Heart right ventricle (tissue), 16 donors: ENCODE measurements at regions of chr6 and their contacts with region 1.

Region 1: DNA sequence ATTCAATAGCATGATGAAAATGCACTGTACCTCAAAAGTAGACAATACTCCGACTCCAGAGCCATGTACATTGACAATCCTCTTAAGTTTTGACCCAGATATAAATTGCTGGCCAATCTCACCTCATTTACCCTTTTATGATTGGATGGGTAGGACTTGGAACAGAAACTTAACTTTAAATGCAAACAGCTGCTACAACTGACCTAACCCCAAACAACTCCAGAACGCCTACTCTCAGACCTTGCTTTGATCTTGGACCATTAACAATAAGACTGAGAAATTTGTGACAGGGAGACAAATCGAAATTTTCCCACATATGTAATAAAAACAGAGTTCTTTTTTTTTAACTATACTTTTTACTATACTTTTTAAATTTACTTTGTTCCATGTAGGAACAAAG is 200.5 kb upstream of the MCHR2 start:
- DNase-seq: no peak
- ATAC-seq: no peak
- H3K4me3 ChIP-seq: no peak overlapping the region
- H3K27ac ChIP-seq: no peak overlapping the region
- H3K4me1 ChIP-seq: no peaks in the 10 kb centered on the region
- H3K27me3 ChIP-seq: no peaks in the 10 kb centered on the region
- CTCF ChIP-seq: no peak

Region 2: DNA sequence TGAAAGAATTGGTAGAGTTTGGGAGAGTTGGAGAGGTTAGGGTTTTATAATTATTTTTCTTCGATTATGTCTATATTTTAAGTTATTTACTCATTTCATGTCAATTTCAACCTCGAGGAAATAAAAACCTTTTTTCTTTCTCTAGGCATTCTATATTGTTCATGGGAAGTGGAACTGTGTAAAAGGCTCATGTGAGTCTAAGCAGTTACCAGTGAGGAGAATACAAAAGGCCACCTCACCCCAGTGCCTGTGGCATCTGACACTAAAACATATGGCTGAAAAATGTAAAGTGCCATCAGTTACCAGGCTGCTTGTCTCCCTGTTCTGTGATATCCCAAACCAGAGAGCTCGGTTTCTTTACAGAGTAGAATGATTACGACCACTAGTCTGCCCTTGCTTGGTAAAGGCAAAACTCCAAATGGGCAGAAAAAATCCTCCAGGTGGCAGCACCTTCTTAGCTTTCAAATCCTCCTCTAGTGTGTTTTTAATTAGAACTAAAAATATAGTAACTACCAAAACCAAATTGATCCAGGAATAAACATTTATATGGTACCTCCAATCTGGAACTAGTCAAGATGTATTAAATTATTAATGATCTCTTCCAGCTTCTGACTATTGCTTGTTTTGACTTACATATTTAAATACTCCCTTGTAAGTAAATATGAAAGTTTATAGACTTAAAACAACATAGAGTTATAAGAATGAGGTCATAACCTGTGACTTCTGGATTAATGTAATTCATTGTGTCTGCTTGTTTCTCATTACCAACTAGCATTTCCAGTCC is 77.9 kb before region 1 on chr6:
- intact Hi-C with region 1: no loop called
- DNase-seq: peak in 1 of 2 donors; percentile 29
- ATAC-seq: no peak
- H3K4me3 ChIP-seq: no peak overlapping the region
- H3K27ac ChIP-seq: no peak overlapping the region
- H3K4me1 ChIP-seq: no peaks in the 10 kb centered on the region
- H3K27me3 ChIP-seq: peaks cover 0 to 10% (median 0%) of the 10 kb centered on the region in 7 donors
- CTCF ChIP-seq: peak; percentile 34 to 72 (median 64)

Region 3: DNA sequence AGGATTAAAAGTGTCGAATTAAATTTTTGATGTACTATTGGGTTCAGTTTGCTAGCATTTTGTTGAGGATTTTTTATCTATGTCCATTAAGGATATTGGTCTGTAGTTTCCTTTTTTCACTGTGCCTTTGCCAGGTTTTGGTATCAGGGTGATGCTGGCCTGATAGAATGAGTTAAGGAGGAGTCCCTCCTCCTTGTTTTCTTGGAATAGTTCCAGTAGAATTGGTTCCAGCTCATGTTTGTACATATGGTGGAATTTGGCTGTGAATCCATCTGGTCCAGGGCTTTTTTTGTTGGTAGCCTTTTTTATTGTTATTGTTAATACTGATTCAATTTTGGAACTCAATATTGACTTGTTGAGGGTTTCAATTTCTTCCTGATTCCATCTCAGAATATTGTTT is 128.4 kb after region 1 on chr6:
- intact Hi-C with region 1: no loop called
- DNase-seq: no peak
- ATAC-seq: no peak
- H3K4me3 ChIP-seq: no peak overlapping the region
- H3K27ac ChIP-seq: no peak overlapping the region
- H3K4me1 ChIP-seq: no peaks in the 10 kb centered on the region
- H3K27me3 ChIP-seq: no peaks in the 10 kb centered on the region
- CTCF ChIP-seq: no peak

Region 4: GRCh38 chr6:101312652-101313051 is 1118.1 kb after region 1 on chr6:
- intact Hi-C with region 1: loop called in 1 of 10 experiments (anchors 5 kb)
- DNase-seq: no peak
- ATAC-seq: no peak
- H3K4me3 ChIP-seq: no peak overlapping the region
- H3K27ac ChIP-seq: no peak overlapping the region
- H3K4me1 ChIP-seq: no peaks in the 10 kb centered on the region
- H3K27me3 ChIP-seq: no peaks in the 10 kb centered on the region
- CTCF ChIP-seq: no peak